ENCODE measurements at regions of chr22 and their contacts with region 1.

Region 1: DNA sequence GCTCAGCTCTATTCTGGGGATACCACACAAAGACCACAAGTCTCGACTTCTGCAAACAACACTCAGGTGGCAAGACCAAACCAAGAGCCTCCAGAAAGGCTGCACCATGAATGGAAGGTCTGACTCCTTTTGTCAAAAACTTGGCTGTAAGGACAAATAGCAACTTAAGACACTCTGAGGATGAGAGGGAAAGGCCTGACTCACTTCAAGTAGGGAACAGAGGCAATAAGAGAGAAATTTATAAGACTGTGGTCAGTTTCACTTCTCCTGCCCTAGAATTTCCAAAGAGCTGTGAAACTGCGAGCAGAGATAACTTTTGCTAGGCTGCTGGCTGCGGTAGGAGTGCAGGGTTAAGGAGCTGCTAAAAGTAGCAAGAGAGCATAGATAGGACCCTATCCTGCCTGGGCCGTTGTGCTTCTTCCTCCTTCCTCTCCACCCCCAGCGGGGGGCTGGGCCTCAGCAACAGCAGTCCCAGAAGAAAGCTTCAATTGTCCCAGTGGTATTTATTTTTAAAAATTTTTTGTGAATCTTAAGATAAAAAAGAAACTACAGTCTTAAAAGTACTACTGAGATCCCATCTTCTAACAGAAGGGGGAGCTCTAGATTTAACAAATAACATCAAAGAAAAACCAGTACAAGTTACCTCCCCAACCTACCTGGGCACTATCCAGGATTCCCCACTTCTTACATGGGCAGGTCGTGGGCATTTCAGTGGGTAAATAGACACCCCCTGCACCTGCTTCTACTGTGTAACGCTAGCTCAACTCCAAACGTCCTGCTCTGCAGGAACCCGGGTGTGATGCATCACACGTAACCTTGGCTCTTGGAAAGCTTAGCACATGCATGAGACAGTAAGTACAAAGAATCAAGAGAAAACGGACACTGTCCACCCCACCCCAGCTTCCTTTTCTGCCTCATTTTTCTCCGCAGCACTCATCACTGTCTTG is 66.4 kb downstream of the SGSM3 start:
- DNase-seq: no peak
- ATAC-seq: peak; percentile 59 to 76 (median 74)
- H3K4me3 ChIP-seq: peak overlapping the region; percentile 51
- H3K27ac ChIP-seq: peak overlapping the region; percentile 85
- H3K4me1 ChIP-seq: peaks cover 39% of the 10 kb centered on the region
- H3K27me3 ChIP-seq: no peaks in the 10 kb centered on the region
- CTCF ChIP-seq: peak; percentile 75

Region 2: DNA sequence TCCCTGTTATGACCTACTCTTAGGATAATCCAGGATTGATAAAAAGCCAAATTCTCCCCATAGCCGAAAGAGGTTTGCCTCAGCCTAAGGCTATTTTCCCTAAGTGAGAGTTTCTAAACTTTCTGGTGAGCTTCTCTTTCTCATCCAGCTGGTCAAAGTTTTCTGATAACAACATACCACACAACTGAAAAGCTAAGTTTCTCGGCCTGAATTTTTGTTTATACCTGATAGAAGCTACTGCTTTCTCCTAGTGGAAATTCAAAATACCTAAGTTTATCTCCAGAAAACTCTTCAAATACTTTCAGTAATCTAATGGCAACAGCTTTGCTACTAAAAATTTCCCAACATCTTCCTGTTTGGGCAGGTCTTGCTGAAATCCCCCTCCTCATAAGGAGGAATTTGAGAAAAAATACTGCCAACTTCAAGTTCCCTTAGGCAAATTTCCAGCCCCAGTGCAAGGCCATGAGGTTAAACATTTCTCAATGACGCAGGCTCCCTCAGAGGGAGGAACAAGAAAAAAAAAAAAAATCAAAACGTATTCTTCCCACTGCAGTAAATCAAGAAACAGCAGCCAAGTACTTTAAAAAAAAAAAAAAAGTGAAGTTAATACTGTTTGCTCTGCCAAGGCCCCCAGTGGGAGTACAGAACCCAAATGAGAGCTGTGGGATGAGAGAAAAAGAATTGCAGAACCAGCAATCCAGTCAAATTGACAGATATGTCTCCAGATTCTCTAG is 72.8 kb after region 1 on chr22:
- intact Hi-C with region 1: loop called in 1 of 2 experiments (anchors 5 kb)
- DNase-seq: peak; percentile 36 to 67
- ATAC-seq: peak in 2 of 4 donors; percentile 7 to 34
- H3K4me3 ChIP-seq: no peak overlapping the region
- H3K27ac ChIP-seq: peak overlapping the region; percentile 75
- H3K4me1 ChIP-seq: peaks cover 58% of the 10 kb centered on the region
- H3K27me3 ChIP-seq: no peaks in the 10 kb centered on the region
- CTCF ChIP-seq: no peak

Region 3: DNA sequence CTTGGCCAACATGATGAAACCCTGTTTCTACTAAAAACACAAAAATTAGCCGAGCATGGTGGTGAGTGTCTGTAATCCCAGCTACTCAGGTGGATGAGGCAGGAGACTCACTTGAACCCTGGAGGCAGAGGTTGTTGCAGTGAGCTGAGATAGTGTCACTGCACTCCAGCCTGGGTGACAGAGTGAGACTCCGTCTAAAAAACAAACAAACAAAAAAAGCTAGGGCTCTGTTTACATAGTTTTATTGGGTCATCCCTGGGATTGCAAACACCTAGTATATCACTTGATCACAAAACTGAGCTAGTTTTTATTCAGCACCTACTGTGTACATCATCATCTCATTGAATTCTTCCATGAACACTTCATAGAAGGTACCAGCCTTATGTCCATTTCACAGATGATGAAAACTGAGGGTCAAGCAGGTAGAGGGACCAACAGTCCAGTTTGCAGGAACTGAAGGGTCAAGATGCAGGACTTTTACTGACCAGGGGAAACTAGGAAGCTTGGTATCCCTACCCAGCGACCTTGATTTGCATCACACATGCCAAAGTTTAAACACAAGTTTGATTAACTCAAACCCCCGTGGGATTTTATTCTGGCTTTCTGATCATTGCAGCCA is 208.9 kb after region 1 on chr22:
- intact Hi-C with region 1: loop called (anchors 1 to 2 kb)
- DNase-seq: no peak
- ATAC-seq: peak in 1 of 4 donors; percentile 3
- H3K4me3 ChIP-seq: peak overlapping the region; percentile 47
- H3K27ac ChIP-seq: no peak overlapping the region
- H3K4me1 ChIP-seq: no peaks in the 10 kb centered on the region
- H3K27me3 ChIP-seq: no peaks in the 10 kb centered on the region
- CTCF ChIP-seq: no peak

Region 4: DNA sequence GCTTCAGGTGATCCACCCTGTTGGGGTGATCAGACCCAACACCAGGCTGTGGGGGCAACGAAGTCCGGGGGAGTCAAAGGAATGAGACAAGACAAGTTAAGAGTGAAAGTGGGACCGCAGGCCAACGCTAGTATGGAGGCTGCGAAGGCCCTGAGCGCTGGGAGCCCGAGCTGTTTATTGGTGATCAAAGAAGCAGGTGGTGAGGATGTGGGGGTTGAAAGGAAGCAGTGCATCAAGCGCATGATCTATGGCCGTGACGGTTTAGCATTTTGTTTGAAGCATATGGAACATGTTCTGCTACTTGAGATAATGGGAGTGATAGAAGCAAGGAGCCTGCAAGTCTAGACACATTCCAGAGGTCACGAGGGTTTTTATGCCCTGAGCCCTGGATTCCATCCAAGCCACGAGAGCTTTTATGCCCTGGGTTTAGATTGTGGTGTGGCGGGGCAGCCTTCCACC is 292.0 kb after region 1 on chr22:
- intact Hi-C with region 1: no loop called
- DNase-seq: no peak
- ATAC-seq: no peak
- H3K4me3 ChIP-seq: no peak overlapping the region
- H3K27ac ChIP-seq: no peak overlapping the region
- H3K4me1 ChIP-seq: no peaks in the 10 kb centered on the region
- H3K27me3 ChIP-seq: no peaks in the 10 kb centered on the region
- CTCF ChIP-seq: no peak

Measured in psoas muscle (tissue), 8 donors.